ENCODE measurements at regions of chr11 and their contacts with region 1.

Region 1: DNA sequence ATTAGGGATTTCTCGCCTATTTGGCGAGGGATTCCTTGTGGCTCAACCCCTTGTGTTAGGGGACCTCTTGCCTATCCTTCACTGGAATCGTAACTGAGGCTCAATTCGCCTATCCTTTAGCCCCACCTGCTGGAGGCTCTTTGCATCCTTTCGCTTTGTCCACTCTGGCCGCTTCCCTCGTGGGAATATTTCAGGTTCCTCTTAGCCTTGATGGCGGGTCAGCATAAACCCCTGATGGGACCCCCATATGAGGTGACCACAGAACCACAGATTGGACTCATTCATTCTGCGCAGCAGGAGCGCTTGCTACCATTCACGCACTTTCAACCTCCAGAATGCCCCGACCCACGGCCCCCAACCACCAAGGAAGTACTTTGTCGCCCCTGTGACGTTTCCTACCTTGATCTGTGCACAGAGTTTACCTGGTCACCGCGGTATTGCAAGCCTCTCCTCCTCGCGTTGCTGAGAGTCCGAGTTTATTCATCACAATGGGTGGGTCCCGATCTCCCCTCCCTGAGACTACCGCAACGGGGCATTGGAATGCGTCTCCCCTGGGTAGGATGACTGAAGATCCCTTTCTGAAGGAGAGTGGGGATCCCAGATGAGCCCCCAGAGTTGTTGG is at the start of gene OR52N2:
- DNase-seq: peak; percentile 36 to 92 (median 74)

Region 2: DNA sequence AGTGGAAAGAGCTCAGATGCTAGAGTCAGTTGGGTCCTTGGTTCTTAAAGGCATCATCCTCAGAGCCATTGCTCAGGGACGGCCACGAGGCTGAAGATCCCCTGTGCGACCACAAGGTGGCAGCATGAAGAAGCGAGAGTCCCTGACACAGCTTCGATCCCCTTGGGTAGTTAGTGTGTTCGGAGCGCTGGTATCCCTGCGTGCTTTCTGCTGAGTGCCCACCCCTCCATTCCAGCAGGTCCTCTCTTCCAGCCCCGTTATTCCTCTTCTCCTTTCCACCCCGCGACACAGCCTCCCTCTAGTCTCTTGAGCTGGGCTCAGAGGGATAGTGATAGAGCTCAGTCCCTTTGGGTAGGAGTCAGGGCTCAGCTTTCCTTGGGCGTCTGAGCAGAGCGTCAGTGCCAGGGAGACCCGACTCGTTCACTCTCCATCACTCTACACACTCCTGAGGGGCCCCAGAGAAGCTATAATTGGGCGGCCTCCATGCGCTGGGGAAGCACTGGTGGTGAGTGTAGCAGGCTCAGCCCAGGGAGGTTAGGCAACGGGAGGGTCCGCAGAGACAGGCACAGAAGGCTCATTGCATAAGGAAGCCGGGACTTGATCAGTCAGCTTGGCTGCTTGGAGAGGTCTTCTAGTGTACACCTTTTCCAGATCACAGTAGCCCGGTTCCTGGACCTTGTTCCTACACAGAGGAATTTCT is 1171.5 kb before region 1 on chr11 and contains the start of gene OR51D1:
- intact Hi-C with region 1: loop called (anchors 10 kb)
- DNase-seq: peak; percentile 45 to 95 (median 74)

Region 3: DNA sequence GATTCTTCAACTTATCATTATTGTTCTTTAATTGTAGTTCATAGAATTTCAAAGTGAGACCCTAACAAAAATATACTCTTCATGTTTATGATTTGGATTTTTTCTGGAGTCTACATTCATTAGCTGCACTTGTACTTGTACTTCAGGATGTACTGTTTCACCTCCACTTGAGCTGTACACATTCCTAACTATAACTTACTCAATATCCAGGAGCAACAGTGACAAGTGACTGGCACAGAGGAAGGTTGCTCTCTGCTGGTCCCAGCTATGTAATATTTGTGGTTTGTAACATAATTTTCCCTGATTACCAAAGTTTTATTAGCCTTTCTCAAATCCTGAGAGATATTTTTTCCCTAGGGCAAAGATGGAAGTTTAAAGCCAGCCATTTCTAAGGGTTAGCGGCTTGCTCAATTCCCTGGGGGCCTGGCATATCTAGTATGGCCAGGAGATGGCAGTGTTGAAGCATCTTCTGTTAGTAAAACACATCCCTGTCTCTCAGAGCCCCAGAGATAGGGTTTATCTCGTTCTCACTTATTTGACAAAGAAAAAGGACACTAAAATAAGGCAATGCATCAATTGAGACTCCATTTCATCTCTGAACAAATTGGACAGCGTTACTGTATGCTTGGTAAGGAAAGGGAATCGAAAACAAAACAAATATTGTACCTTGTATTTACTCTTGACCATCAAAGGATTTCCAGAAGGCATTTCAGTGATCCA is 684.6 kb before region 1 on chr11:
- intact Hi-C with region 1: loop called (anchors 1 kb)
- DNase-seq: peak in 9 of 10 donors; percentile 51 to 89 (median 70)

Region 4: GRCh38 chr11:5476184-5476819 is 332.3 kb before region 1 on chr11:
- intact Hi-C with region 1: loop called (anchors 1 kb)
- DNase-seq: peak in 3 of 10 donors; percentile 7 to 35 (median 28)

Region 5: GRCh38 chr11:5514841-5515240 is 293.8 kb before region 1 on chr11:
- intact Hi-C with region 1: no loop called
- DNase-seq: no peak

Region 6: GRCh38 chr11:6544921-6545850 is 736.6 kb after region 1 on chr11:
- intact Hi-C with region 1: no loop called
- DNase-seq: peak in 1 of 10 donors; percentile 54